Right ventricle myocardium inferior (tissue), 1 donor: ENCODE measurements at regions of chr19 and their contacts with region 1.

Region 1: DNA sequence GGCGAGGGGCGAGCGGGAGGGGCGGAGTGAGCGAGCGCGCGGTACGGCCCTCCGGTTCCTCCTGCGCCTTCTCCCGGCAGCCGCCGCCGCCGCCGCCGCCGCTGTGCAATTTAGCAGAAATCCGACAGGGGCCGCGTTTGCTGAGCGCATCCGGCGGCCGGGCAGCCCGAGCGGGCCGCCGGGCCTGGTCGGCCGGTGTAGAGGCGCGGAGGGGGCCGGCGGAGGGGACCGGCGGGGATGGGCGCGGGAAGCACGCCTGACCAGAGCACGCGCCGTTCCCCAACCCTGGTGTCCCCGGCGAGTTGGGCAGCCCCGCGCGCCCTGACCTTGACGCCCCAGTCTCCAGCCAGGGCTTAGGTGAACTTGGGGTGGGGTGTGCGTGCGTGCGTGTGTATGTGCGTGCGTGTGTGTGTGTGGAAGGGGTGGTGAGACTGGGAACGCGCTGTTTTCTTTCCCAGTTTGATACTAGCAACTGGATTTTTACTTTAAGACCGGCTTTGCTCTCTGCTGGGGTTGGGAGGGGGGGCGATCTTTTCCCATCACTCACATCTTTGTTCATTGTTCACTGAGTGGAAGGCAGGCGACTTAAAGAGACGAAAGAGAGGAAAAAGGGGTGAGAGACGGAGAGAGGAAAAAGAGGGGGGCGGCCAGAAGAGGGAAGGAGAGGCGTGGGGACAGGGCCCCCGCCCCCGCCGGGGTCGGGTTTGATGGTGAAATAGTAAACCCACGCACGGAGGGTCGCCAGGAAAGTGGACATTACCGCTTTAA is 144.3 kb upstream of the ZNF536 start:
- DNase-seq: peak; percentile 75
- ATAC-seq: peak; percentile 90

Region 2: DNA sequence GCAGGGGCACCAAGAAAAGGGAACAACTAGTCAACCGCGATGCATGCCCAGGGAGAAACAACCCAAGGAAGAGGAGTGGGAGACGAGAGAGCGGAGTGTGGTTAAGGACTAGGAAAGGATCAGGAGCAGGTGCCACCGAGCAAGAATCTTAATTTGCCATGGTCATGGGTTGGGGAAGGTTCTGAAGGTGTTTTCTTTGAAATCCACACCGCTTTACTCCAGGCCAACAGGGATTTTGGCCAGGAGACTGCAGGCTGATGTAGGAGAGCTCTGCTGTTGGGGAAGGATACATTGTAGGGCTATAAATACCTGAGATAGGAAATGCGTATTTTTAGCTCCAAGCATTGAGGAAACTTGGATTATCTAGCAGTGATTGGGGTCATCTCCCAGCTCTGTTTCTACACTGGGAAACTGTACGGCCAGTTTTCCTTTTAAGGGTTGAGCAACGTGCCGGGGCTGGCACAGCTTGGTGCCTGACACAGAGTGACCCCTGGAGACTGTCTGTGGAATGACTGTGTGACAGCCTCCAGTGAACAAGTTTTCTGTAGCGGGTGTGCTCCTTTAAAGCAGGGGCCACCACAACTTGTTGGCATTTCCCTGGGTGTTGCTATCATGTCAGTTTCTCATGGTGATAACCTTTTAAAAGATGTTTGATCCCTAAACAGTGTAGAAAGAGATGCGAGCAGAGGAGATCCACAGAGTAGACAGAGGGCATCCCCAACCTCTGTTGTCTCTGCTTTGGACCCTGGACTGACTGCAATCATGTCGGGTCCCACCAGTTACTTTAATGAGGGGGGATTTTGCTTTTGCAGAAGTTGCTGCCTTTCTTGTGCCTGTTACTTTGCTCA is 178.6 kb after region 1 on chr19:
- intact Hi-C with region 1: loop called (anchors 2 kb)
- DNase-seq: peak; percentile 27
- ATAC-seq: peak; percentile 86

Region 3: DNA sequence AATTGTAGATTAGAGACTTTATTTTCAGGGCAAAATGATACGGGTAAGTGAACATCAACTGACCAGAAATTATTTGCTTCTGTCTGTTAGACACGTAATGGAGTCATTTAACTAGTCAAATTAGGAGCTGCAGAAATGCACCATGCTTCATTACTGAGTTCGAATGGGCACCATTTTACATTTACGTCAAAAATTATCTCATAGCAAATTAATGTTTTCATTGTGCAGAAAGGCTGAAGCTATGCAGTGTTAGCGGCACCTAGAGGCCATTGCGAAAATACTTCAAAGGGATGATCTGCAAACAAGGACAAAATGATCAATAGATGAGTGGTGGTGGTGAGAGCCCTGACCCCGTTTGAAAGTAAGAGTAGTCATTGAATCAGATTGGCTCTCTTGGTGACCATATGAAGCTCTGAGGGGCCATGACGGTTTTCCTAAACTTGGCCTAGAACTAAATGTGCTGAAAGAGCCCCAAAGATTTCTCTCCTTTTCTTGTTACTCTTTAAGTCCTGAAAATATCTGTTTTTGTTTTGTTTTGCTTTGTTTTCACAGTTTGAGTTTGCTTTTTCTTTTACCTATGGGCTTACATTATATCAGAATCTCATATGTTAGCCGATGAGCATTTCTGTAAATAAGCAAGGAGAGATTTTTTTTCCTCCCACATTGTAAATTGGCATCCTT is 422.2 kb after region 1 on chr19:
- intact Hi-C with region 1: loop called (anchors 2 kb)
- DNase-seq: no peak
- ATAC-seq: no peak